Pancreas (tissue), 10 donors: ENCODE measurements at regions of chr13 and their contacts with region 1.

Region 1: GRCh38 chr13:60335531-60335930 is 61.5 kb upstream of the TDRD3 start:
- DNase-seq: no peak
- ATAC-seq: peak in 2 of 4 donors; percentile 65 to 66
- H3K4me3 ChIP-seq: no peak overlapping the region
- H3K27ac ChIP-seq: no peak overlapping the region
- H3K4me1 ChIP-seq: no peaks in the 10 kb centered on the region
- H3K27me3 ChIP-seq: no peaks in the 10 kb centered on the region
- CTCF ChIP-seq: peak; percentile 16 to 57 (median 31)

Region 2: GRCh38 chr13:59690857-59691500 is 644.6 kb before region 1 on chr13:
- intact Hi-C with region 1: loop called in 1 of 3 experiments (anchors 10 kb)
- DNase-seq: no peak
- ATAC-seq: peak in 1 of 4 donors; percentile 29
- H3K4me3 ChIP-seq: no peak overlapping the region
- H3K27ac ChIP-seq: no peak overlapping the region
- H3K4me1 ChIP-seq: no peaks in the 10 kb centered on the region
- H3K27me3 ChIP-seq: no peaks in the 10 kb centered on the region
- CTCF ChIP-seq: no peak

Region 3: GRCh38 chr13:60427285-60427684 is 91.8 kb after region 1 on chr13:
- intact Hi-C with region 1: no loop called
- DNase-seq: no peak
- ATAC-seq: no peak
- H3K4me3 ChIP-seq: no peak overlapping the region
- H3K27ac ChIP-seq: no peak overlapping the region
- H3K4me1 ChIP-seq: peaks cover 0 to 4% (median 0%) of the 10 kb centered on the region in 3 donors
- H3K27me3 ChIP-seq: no peaks in the 10 kb centered on the region
- CTCF ChIP-seq: no peak